ENCODE measurements at regions of chr7 and their contacts with region 1.

Region 1: DNA sequence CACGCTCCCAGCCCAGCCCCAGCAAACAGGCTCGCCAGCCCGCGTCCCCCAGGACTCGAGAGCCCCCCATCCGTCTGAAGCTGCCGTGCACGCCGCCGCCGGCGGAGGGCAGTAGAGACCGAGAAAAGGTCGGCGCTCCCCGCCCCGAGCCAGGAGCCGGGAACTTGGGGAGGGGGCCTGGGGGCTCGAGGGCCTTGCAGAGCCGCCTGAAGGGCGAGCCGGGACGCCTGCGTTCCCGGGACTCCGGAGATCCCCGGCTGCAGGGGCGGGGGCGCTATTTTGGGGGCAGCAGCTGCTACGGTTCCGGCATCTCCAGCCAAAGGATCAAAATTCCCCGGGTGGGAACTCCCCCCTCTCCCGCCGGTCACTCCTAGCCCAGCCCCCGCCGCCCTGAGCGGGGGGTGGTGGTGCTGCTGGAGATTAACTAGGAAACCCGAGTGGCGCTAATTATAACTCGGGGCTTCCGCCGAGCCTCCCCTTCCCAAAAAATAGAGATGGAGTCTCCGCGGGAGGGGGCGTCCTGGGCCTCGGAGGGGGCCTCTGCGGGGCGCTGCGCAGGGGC is 747 bp downstream of the ACHE start:
- DNase-seq: peak in 1 of 2 donors; percentile 88
- H3K4me3 ChIP-seq: peak overlapping the region; percentile 26
- CTCF ChIP-seq: no peak
- POLR2A ChIP-seq: no peak

Region 2: DNA sequence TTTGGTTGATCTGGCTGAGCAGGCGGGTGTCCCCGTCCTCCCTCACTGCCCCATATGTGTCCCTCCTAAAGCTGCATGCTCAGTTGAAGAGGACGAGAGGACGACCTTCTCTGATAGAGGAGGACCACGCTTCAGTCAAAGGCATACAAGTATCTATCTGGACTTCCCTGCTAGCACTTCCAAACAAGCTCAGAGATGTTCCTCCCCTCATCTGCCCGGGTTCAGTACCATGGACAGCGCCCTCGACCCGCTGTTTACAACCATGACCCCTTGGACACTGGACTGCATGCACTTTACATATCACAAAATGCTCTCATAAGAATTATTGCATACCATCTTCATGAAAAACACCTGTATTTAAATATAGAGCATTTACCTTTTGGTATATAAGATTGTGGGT is 163.4 kb after region 1 on chr7:
- intact Hi-C with region 1: loop called (anchors 5 kb)
- DNase-seq: peak; percentile 34 to 88
- H3K4me3 ChIP-seq: no peak overlapping the region
- CTCF ChIP-seq: no peak
- POLR2A ChIP-seq: no peak

Region 3: DNA sequence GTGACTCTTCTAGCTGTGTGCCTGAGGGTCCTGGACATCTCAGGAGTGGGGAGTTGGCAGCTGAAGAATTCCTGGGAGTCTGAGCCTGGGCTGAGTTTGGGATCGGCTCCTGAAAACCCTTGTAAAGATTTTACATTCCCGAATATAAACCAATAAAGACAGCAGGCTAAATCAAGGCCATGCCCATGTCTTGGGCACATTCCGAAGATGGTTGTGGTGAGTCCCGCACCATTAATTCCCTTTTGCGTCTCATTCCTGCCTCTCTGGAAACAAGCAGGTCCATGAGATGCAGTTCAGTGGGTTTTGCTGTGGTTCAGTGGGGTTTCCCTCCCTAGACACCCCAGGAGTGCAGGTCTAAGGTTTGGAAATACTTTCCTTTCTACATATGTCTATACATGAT is 558.7 kb after region 1 on chr7:
- intact Hi-C with region 1: no loop called
- DNase-seq: no peak
- H3K4me3 ChIP-seq: no peak overlapping the region
- CTCF ChIP-seq: no peak
- POLR2A ChIP-seq: no peak

Measured in lower leg skin (tissue), 4 donors.